ENCODE measurements at regions of chr11 and their contacts with region 1.

Region 1: GRCh38 chr11:123407130-123407995 is 22.7 kb upstream of the GRAMD1B start:
- DNase-seq: no peak
- H3K4me3 ChIP-seq: no peak overlapping the region
- CTCF ChIP-seq: peak; percentile 74

Region 2: GRCh38 chr11:123231777-123232176 is 175.6 kb before region 1 on chr11:
- CTCF ChIA-PET with region 1: no interaction called
- POLR2A ChIA-PET with region 1: no interaction called
- DNase-seq: no peak
- H3K4me3 ChIP-seq: no peak overlapping the region
- CTCF ChIP-seq: no peak

Region 3: GRCh38 chr11:123301696-123302400 is 105.5 kb before region 1 on chr11:
- CTCF ChIA-PET with region 1: interaction called, 12 read pairs
- POLR2A ChIA-PET with region 1: no interaction called
- DNase-seq: no peak
- H3K4me3 ChIP-seq: peak overlapping the region; percentile 47
- CTCF ChIP-seq: peak; percentile 79

Region 4: GRCh38 chr11:123391646-123392348 is 15.6 kb before region 1 on chr11:
- CTCF ChIA-PET with region 1: interaction called, 21 read pairs
- POLR2A ChIA-PET with region 1: no interaction called
- DNase-seq: no peak
- H3K4me3 ChIP-seq: no peak overlapping the region
- CTCF ChIP-seq: no peak

Region 5: DNA sequence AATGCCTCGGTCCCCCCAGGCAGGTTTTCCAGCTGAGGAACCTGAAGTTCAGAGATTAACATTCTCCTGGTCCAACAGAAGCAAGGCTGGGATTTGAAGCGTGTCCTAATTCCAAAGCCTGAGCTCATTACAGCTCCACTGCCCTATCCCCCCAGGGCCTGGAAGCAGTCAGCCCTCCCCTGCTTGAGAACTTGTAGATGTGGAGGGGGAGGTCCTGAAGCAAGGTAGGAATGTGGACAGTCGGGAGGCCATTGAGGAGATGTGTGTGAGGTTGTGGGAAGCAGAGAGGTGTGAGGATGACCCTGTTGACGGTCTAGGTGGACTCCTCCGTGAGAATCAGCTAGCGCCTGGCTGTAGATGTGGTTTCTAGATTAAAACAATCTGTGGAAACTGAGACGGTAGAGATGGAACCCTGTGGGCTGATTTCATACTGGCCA is 30.8 kb after region 1 on chr11:
- CTCF ChIA-PET with region 1: interaction called, 14 read pairs
- POLR2A ChIA-PET with region 1: no interaction called
- DNase-seq: no peak
- H3K4me3 ChIP-seq: no peak overlapping the region
- CTCF ChIP-seq: no peak

Region 6: GRCh38 chr11:123478352-123478987 is 71.1 kb after region 1 on chr11:
- CTCF ChIA-PET with region 1: interaction called, 422 read pairs
- POLR2A ChIA-PET with region 1: interaction called, 7 read pairs
- DNase-seq: peak; percentile 41
- H3K4me3 ChIP-seq: no peak overlapping the region
- CTCF ChIP-seq: peak; percentile 53

Region 7: GRCh38 chr11:123580557-123581275 is 173.4 kb after region 1 on chr11:
- CTCF ChIA-PET with region 1: interaction called, 15 read pairs
- POLR2A ChIA-PET with region 1: no interaction called
- DNase-seq: no peak
- H3K4me3 ChIP-seq: no peak overlapping the region
- CTCF ChIP-seq: peak; percentile 98

Measured in AG04449 (cell line).